Dendritic cell treated with granulocyte-macrophage colony-stimulating factor and Interleukin-4, amounts not matched to agents 40 ng/mL and 50 ng/mL, for 4 days (primary cell): ENCODE measurements at regions of chr7 and their contacts with region 1.

Region 1: DNA sequence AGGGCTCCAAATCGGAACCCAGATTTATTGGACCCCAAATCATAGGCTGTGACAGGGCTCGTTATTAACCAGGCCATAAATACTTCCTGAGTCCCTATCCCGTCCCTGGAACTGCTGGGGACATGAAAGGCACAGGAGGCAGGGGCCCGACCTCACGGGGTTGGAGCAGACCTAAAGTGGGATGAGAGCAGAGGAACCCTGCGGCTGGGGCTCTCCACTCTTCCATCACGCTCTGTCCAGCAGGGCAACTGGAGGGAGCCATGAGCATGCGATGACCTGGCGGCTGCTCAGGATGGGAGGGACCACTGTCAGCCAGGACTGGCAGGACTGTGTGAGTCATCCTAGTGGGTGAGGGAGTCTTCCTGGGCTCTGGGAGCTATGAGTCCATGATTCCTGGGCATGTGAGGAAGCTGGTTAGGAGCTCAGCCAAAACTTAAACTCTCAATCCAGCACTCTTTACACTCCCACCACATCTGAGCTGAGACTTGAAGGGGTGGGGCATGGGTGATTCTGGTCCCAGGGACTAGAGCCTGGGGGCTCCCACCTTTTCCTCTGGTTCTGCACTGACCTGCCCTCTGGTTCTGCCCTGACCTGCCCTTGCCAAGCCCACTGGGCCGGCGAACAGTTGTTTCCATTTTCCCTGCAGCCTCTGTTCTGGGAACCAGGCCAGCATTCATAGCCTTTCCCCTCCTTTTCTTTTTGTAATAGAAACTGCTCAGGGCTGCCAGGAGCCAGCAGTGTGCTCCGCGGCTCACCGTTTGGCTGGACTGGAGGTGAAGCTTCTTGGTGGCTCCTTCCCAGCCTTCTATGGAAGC is 47.1 kb downstream of the SYPL1 start:
- H3K4me3 Mint-ChIP-seq: no peak overlapping the region
- H3K27ac Mint-ChIP-seq: peak overlapping the region; percentile 20
- H3K4me1 Mint-ChIP-seq: peaks cover 33% of the 10 kb centered on the region
- H3K27me3 Mint-ChIP-seq: peaks cover 15% of the 10 kb centered on the region

Region 2: DNA sequence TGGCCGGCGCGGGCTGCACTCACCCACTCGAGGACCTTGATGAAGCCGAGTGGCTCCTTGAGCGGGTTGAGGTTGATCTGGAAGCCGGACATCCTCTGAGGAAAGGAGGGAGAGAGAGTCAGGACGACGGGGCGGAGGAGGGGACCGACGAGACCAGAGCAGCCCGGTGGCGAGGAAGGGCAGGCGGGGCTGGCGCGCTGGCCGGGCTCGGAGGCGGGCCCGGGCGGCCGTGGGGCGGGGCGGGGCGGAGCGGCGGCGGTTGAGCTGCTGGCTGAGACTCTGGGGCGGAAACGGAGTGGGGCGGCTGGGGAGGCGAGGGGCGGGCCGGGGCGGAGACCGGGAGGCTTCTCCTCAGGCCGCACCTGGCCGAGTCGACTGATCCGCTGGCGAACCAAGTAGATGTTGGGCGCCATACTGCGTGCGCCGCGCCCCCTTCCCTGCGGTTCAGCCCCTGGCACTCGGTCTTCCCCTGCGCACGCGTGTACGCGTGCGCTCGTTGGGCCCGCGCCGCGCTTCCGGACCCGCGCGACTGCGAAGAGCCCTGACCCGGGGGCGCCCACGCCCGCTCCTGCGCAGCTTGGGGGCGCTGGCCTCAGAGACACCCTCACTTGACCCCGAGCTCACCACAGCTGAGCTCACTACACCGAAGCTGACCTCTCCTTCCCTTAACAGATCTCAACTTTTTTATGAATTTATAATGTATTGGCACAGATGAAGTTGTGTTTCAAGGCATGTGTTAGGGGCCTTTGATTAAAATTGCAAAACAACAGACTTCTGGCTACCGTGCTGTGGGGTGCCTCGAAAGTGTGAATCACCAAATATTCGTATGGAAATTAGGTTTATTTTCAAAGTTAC is 47.4 kb after region 1 on chr7 and contains the start of gene SYPL1:
- intact Hi-C with region 1: loop called (anchors 10 kb)
- H3K4me3 Mint-ChIP-seq: peak within 1 kb of the TSS; percentile 94
- H3K27ac Mint-ChIP-seq: peak within 1 kb of the TSS; percentile 89
- H3K4me1 Mint-ChIP-seq: peaks cover 28% of the 10 kb centered on the region
- H3K27me3 Mint-ChIP-seq: no peaks in the 10 kb centered on the region